HAP-1 (cell line): ENCODE measurements at regions of chr9 and their contacts with region 1.

Region 1: GRCh38 chr9:109192732-109193361 is 25.8 kb upstream of the FRRS1L start:
- DNase-seq: peak; percentile 54 to 82
- H3K4me3 ChIP-seq: no peak overlapping the region
- H3K4me1 ChIP-seq: no peaks in the 10 kb centered on the region; the same call in 1 of the 2 replicates
- H3K27me3 ChIP-seq: no peaks in the 10 kb centered on the region

Region 2: DNA sequence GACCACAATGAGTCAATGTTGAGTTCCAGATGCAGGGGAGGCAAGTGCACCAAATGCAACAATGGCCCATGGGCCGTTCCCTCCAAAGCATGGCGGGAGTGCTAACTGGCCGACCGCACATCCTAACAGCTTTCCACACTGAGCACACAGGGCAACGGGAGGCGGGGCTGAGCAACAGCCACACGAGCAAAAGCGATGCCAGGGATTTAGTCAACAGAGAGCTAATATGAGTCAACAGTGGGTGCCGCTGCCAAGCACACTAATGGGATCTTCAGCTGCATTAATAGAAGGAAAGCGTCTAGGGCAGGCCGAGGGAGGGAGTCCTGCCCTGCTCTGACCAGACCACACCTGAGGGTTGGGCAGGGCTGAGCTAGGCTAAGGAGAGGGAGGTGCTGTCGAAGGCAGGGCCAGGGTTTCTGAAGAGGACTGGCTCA is 123.4 kb after region 1 on chr9:
- in situ Hi-C with region 1: loop called (anchors 5 kb)
- DNase-seq: no peak
- H3K4me3 ChIP-seq: no peak overlapping the region
- H3K4me1 ChIP-seq: peaks cover 40% of the 10 kb centered on the region
- H3K27me3 ChIP-seq: no peaks in the 10 kb centered on the region

Region 3: GRCh38 chr9:109401168-109401989 is 208.5 kb after region 1 on chr9:
- in situ Hi-C with region 1: loop called (anchors 10 kb)
- DNase-seq: peak; percentile 74 to 88
- H3K4me3 ChIP-seq: no peak overlapping the region
- H3K4me1 ChIP-seq: no peaks in the 10 kb centered on the region
- H3K27me3 ChIP-seq: no peaks in the 10 kb centered on the region

Region 4: GRCh38 chr9:109846776-109847175 is 653.9 kb after region 1 on chr9:
- in situ Hi-C with region 1: no loop called
- DNase-seq: no peak
- H3K4me3 ChIP-seq: no peak overlapping the region
- H3K4me1 ChIP-seq: no peaks in the 10 kb centered on the region
- H3K27me3 ChIP-seq: no peaks in the 10 kb centered on the region